Psoas muscle (tissue), 8 donors: ENCODE measurements at regions of chr17 and their contacts with region 1.

Region 1: DNA sequence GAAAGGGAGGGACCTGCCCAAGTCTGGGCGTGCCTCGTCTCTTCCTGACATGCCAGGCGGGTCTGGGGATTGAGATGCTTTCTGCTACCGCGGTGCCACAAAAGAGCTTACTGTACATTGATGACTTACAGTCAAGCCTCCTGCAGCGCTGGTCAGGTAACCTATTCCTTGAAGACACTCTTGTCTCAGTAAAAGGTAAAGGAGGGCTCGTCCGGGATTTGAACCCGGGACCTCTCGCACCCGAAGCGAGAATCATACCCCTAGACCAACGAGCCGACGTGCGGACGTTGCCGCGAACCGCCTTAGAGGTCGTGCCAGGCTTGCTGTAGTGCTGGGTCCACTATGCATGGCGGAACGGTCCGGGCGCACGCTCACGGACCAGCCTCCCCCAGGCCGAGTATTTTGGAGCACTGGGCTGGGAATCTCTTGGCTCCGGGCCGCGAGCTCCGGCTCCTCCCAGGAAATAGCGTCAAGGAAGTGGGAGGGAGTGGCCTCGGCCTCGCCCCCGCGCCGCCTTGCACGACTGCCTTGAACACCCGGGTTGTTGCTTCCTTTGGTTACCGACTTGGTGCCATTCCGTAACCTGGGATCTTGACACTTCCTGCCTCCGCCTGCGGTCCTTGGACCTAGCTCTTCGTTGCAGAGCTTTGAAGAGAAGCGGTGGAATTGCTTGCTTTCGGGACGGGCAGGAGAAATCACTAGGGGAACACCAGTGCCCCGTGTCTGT is 12.4 kb upstream of the AURKB start:
- DNase-seq: peak; percentile 95 to 97
- ATAC-seq: peak; percentile 63 to 74 (median 69)
- H3K4me3 ChIP-seq: peak overlapping the region; percentile 88
- H3K27ac ChIP-seq: peak overlapping the region; percentile 93
- H3K4me1 ChIP-seq: peaks cover 15% of the 10 kb centered on the region
- H3K27me3 ChIP-seq: no peaks in the 10 kb centered on the region
- CTCF ChIP-seq: no peak

Region 2: GRCh38 chr17:7081341-7082062 is 1141.3 kb before region 1 on chr17:
- intact Hi-C with region 1: no loop called
- DNase-seq: peak in 1 of 2 donors; percentile 64
- ATAC-seq: no peak
- H3K4me3 ChIP-seq: no peak overlapping the region
- H3K27ac ChIP-seq: no peak overlapping the region
- H3K4me1 ChIP-seq: no peaks in the 10 kb centered on the region
- H3K27me3 ChIP-seq: peaks cover 0 to 13% (median 3%) of the 10 kb centered on the region in 3 donors
- CTCF ChIP-seq: no peak

Region 3: DNA sequence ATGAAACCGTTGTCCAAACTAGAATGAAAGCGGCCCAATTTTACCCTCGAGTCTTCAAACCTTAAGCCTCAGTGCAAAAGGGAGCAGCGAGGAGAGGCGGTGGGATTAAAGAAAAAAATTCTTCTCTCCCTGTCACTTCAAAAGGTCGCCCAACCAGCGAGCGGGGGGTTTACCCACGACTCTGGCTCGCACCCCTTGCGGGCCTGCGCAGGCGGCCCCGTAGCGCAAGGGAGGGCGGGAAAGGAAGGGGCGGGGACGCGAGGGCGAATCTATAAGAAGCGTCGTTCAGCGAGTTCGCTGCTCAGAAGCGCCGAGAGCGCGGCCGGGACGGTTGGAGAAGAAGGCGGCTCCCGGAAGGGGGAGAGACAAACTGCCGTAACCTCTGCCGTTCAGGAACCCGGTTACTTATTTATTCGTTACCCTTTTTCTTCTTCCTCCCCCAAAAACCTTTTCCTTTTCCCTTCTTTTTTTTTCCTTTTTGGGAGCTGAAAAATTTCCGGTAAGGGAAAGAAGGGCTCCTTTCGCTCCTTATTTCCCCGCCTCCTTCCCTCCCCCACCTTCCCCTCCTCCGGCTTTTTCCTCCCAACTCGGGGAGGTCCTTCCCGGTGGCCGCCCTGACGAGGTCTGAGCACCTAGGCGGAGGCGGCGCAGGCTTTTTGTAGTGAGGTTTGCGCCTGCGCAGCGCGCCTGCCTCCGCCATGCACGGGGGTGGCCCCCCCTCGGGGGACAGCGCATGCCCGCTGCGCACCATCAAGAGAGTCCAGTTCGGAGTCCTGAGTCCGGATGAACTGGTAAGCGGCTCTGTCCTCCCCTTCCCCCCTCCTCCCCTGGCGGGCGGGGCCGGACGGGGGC is 738.5 kb before region 1 on chr17 and contains the start of gene POLR2A:
- intact Hi-C with region 1: loop called in 1 of 2 experiments (anchors 5 kb)
- DNase-seq: peak; percentile 99
- ATAC-seq: peak; percentile 81 to 84 (median 82)
- H3K4me3 ChIP-seq: peak within 1 kb of the TSS; percentile 85
- H3K27ac ChIP-seq: peak within 1 kb of the TSS; percentile 100
- H3K4me1 ChIP-seq: peaks cover 55% of the 10 kb centered on the region
- H3K27me3 ChIP-seq: no peaks in the 10 kb centered on the region
- CTCF ChIP-seq: no peak
- total RNA-seq, gene POLR2A: 42.7 to 74.3 (median 56.9) TPM

Region 4: DNA sequence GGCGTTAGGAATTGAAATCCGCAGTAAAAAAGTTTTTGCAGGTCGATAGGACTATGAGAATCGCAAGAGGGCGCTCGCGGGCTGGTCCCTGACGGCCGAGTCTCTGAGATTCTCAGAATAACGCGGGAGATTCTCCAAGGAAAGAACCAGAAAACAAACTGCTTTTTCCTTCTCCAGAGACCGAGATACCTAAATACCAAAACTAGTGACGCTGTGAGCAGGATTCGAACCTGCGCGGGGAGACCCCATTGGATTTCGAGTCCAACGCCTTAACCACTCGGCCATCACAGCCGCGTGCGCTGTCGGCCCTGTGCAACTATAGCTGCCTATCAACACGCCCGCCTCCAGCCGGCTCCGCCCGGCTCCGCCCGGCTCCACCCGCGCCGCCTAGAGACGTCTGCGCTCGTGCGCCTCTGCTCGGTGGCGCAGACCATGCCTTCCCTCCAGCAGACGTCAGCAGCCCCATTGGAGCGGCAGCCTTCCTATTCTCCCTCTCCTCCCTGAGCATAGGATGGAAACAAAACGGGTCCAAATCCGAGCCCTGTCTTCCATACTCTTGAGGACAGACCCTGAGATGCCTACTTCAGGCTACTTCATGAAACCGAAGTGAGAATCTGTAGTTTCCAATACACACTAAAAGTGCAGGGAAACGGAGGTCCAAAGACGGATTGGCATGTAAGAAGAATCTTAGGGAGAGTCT is 84.0 kb before region 1 on chr17:
- intact Hi-C with region 1: loop called in 1 of 2 experiments (anchors 5 kb)
- DNase-seq: peak; percentile 91 to 97
- ATAC-seq: peak; percentile 81 to 87 (median 82)
- H3K4me3 ChIP-seq: peak overlapping the region; percentile 48
- H3K27ac ChIP-seq: peak overlapping the region; percentile 93
- H3K4me1 ChIP-seq: peaks cover 33% of the 10 kb centered on the region
- H3K27me3 ChIP-seq: no peaks in the 10 kb centered on the region
- CTCF ChIP-seq: peak; percentile 91

Region 5: GRCh38 chr17:8189711-8190477 is 32.9 kb before region 1 on chr17 and contains the start of gene BORCS6:
- intact Hi-C with region 1: loop called (anchors 1 kb)
- DNase-seq: peak; percentile 97 to 99
- ATAC-seq: peak; percentile 72 to 75 (median 74)
- H3K4me3 ChIP-seq: peak within 1 kb of the TSS; percentile 93
- H3K27ac ChIP-seq: peak within 1 kb of the TSS; percentile 96
- H3K4me1 ChIP-seq: peaks cover 22% of the 10 kb centered on the region
- H3K27me3 ChIP-seq: no peaks in the 10 kb centered on the region
- CTCF ChIP-seq: no peak
- total RNA-seq, gene BORCS6: 8.8 to 11.2 (median 9.7) TPM

Region 6: GRCh38 chr17:8294814-8295316 is 72.1 kb after region 1 on chr17:
- intact Hi-C with region 1: loop called in 1 of 2 experiments (anchors 2 kb)
- DNase-seq: no peak
- ATAC-seq: peak; percentile 4 to 21 (median 8)
- H3K4me3 ChIP-seq: peak overlapping the region; percentile 82
- H3K27ac ChIP-seq: peak overlapping the region; percentile 90
- H3K4me1 ChIP-seq: peaks cover 8% of the 10 kb centered on the region
- H3K27me3 ChIP-seq: no peaks in the 10 kb centered on the region
- CTCF ChIP-seq: no peak

Region 7: DNA sequence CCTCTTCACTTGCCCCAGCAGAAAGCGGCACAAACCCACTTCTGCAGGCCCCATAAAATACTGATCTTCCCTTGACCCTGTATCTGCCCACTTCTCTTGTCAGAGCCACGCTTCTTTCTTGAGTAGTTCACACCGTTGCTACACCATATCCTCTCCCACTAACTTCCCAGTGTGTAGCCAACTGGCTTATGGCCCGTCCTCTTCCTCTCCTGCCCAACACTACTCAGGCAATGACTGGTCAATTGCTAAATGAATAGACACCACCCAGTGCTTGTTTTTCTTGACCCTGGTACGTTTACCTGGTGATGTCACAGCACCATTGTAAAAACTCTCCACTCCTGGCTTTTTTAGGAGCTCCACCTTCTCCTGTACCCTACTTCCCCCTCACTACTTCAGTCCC is 299.8 kb after region 1 on chr17:
- intact Hi-C with region 1: no loop called
- DNase-seq: no peak
- ATAC-seq: no peak
- H3K4me3 ChIP-seq: no peak overlapping the region
- H3K27ac ChIP-seq: no peak overlapping the region
- H3K4me1 ChIP-seq: no peaks in the 10 kb centered on the region
- H3K27me3 ChIP-seq: no peaks in the 10 kb centered on the region
- CTCF ChIP-seq: no peak